ENCODE measurements at regions of chrX and their contacts with region 1.

Region 1: DNA sequence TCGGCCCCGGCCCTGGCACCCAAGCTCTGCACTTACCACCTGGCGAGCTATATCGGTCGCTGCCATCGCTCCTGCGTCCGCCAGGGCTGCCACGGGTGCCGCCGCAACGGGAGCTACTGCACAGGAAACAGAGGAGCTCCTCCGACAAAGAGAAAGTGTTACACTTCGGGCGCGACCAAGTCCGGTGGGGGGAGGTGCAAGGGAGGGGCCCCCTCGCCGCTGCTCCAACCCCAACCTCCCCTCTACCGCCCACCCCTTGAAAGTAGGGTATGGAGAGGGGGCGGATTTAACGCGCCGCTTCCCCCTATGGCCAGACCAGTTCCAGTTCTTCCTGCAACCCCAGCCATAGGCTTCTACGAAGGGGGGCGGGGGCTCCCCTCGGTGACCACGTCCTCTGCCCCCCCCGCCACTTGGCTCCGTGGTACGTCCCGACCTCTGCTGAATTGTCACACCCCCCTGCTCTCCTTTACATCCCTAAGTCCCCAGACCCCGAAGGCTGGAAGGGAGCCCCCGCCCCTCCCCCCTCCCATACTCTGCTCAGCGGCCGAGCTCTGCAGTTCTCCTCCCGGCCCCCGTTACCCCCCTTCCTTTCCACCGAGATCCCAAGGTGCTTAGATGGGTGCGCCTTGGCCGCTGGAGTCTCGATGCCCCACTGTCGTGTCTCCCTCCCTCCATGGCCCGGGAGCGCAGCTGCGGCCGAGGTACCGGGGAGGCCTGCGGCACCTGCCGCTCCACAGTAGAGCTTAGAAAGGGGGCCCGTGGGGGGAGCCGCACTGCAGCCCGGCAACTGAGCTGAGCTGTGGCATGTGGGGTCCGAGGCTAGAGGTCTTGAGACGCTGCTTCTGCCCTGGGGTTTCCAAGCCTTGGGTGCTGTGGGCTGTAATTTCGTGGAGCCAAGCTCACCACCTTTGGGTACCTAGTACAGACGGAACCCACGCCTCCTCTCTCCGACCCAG is at the start of gene SEPTIN6:
- DNase-seq: peak; percentile 63 to 86 (median 85)
- H3K4me3 ChIP-seq: peak within 1 kb of the TSS; percentile 67 to 88 (median 84)
- H3K4me3 Mint-ChIP-seq: peak within 1 kb of the TSS; percentile 90 to 95
- H3K27ac ChIP-seq: peak within 1 kb of the TSS; percentile 82 to 83
- H3K27ac Mint-ChIP-seq: peak within 1 kb of the TSS; percentile 91 to 96 (median 95)
- H3K4me1 ChIP-seq: peaks cover 34 to 35% of the 10 kb centered on the region in 2 donors
- H3K4me1 Mint-ChIP-seq: peaks cover 24% of the 10 kb centered on the region
- H3K27me3 ChIP-seq: no peaks in the 10 kb centered on the region
- H3K27me3 Mint-ChIP-seq: peaks cover 2 to 9% (median 2%) of the 10 kb centered on the region in 3 donors
- CTCF ChIP-seq: no peak
- polyA plus RNA-seq, gene SEPTIN6: 21.8 to 52.7 (median 31.1) TPM

Region 2: DNA sequence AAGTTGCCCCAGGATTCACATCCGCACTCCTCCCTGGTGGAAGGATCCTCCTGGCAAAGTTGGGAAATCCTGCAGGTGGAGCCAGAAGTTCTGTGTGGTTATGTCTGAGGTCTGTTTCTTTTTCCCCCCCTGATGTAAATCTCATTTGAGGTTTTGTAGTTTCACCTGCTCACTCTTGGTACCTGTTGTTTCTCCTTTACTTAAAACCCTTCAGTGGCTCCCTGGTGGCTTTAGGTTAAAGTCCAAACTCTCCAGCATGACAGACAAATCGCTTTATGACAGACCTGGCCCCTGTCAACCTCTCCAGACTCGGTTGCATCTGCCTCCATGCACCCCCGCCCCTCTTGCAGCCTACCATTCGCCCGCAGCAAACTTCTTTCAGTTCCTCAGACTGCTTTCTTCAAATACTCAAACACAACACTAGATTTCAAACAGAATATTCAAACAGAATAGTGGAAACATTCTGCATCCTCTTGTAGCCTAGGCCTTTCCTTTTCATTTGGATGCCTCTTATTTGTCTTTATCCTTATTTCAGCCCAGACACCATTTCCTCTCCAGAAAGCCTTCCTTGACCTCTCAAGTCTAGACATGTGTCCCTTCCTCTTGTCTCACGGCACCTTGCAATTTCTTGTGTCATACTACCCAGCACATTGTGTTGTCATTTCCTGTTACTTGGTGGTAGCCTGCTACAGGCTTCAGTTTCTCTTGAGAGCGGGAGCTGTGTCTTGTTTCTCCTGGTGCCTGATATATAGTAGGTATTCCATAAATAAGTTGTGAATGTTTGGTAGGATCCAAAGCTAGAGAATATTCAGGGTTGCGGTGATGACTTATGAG is 941.2 kb before region 1 on chrX:
- intact Hi-C with region 1: no loop called
- DNase-seq: peak; percentile 76 to 86 (median 84)
- H3K4me3 ChIP-seq: peak overlapping the region in 1 of 3 experiments; percentile 25
- H3K4me3 Mint-ChIP-seq: peak overlapping the region; percentile 7 to 60
- H3K27ac ChIP-seq: peak overlapping the region; percentile 44 to 87
- H3K27ac Mint-ChIP-seq: peak overlapping the region; percentile 77 to 96 (median 82)
- H3K4me1 ChIP-seq: peaks cover 47% of the 10 kb centered on the region in 2 donors
- H3K4me1 Mint-ChIP-seq: peaks cover 44% of the 10 kb centered on the region
- H3K27me3 ChIP-seq: no peaks in the 10 kb centered on the region
- H3K27me3 Mint-ChIP-seq: peaks cover 0 to 14% (median 0%) of the 10 kb centered on the region in 3 donors
- CTCF ChIP-seq: no peak

Region 3: GRCh38 chrX:119529345-119530276 is 163.7 kb before region 1 on chrX:
- intact Hi-C with region 1: no loop called
- DNase-seq: peak in 2 of 3 donors; percentile 27 to 28
- H3K4me3 ChIP-seq: peak overlapping the region; percentile 3 to 69 (median 17)
- H3K4me3 Mint-ChIP-seq: peak overlapping the region; percentile 47 to 79
- H3K27ac ChIP-seq: peak overlapping the region; percentile 46 to 74
- H3K27ac Mint-ChIP-seq: peak overlapping the region; percentile 49 to 86 (median 86)
- H3K4me1 ChIP-seq: peaks cover 31 to 36% of the 10 kb centered on the region in 2 donors
- H3K4me1 Mint-ChIP-seq: peaks cover 34% of the 10 kb centered on the region
- H3K27me3 ChIP-seq: no peaks in the 10 kb centered on the region
- H3K27me3 Mint-ChIP-seq: peaks cover 0 to 13% (median 0%) of the 10 kb centered on the region in 3 donors
- CTCF ChIP-seq: no peak

Region 4: DNA sequence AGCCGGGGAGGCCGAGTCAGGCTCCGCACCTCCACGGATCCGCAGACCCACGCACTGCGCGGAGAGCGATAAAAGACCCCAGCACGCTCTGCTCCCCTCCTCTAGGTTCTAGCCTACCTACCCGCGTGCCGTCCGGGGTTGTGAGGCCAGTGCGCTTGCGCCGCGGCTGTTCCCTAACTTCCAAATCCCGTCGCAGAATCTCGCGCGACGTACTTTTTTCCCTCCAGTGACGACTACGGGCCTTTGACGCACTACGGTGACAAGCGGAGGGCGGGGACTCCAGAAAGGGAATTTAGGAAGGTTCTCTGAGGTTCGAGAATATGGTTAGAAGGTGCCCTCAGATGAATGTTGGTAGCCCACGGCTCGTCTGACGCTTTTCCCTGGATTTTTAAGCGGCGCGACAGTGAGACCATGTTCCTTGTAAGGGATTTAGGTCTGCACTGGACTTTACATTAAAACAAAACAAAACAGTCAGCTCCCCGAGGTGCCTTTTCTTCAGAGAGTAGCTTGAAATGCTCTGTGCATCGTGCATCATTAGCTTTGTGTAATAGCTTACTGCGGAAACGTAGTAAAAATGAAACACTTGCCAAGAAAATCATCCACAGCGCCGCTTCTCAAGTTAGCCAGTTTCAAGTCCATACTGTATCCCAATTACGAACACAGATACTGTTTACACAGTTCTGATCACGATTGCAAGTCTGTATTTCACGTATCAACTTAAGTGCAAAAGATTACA is 86.9 kb before region 1 on chrX and contains the start of gene NKRF:
- intact Hi-C with region 1: loop called in 1 of 2 experiments (anchors 10 kb)
- DNase-seq: peak; percentile 89 to 91 (median 89)
- H3K4me3 ChIP-seq: peak within 1 kb of the TSS; percentile 78 to 86 (median 83)
- H3K4me3 Mint-ChIP-seq: peak within 1 kb of the TSS; percentile 95 to 97
- H3K27ac ChIP-seq: peak within 1 kb of the TSS; percentile 71 to 91
- H3K27ac Mint-ChIP-seq: peak within 1 kb of the TSS; percentile 97 to 99 (median 99)
- H3K4me1 ChIP-seq: peaks cover 11 to 14% of the 10 kb centered on the region in 2 donors
- H3K4me1 Mint-ChIP-seq: peaks cover 18% of the 10 kb centered on the region
- H3K27me3 ChIP-seq: no peaks in the 10 kb centered on the region
- H3K27me3 Mint-ChIP-seq: peaks cover 0 to 35% (median 0%) of the 10 kb centered on the region in 3 donors
- CTCF ChIP-seq: no peak
- polyA plus RNA-seq, gene NKRF: 1.3 to 4.7 (median 2.4) TPM

Region 5: GRCh38 chrX:119617517-119618164 is 75.7 kb before region 1 on chrX:
- intact Hi-C with region 1: loop called in 1 of 2 experiments (anchors 5 kb)
- DNase-seq: peak in 2 of 3 donors; percentile 30 to 34
- H3K4me3 ChIP-seq: peak overlapping the region in 2 of 3 experiments; percentile 21 to 66
- H3K4me3 Mint-ChIP-seq: peak overlapping the region; percentile 31 to 75
- H3K27ac ChIP-seq: peak overlapping the region; percentile 71 to 73
- H3K27ac Mint-ChIP-seq: peak overlapping the region; percentile 81 to 93 (median 88)
- H3K4me1 ChIP-seq: peaks cover 37 to 43% of the 10 kb centered on the region in 2 donors
- H3K4me1 Mint-ChIP-seq: peaks cover 44% of the 10 kb centered on the region
- H3K27me3 ChIP-seq: no peaks in the 10 kb centered on the region
- H3K27me3 Mint-ChIP-seq: peaks cover 0 to 7% (median 0%) of the 10 kb centered on the region in 3 donors
- CTCF ChIP-seq: no peak

Region 6: DNA sequence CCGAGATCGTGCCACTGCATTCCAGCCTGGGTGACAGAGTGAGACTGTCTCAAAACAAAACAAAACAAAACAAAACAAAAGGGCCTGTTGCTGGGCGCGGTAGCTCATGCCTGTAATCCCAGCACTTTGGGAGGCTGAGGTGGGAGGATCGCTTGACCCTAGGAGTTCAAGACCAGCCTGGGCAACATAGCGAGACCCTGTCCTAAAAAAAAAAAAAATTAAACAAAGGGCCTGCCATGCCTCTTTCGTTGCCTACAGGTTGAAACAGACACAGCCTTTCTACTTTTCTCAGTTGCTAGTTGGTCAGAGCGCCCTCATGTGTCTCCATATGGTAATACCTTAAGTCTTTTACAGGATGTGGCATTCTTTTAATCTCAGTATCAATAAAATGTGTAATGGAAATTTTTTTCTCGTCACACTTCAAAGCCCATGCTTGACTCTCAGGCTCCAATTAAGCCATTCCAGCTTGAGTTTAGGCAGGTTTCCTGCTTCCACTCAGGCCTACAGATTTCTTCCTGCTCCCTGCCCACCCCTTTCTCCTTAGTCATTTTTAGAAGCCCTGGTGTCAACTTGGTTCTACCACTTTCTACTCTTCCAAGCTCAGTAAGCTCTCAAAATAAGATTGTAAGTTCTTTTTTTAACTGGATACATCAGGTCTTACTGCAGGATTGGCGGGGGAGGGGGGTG is 60.4 kb after region 1 on chrX:
- intact Hi-C with region 1: loop called in 1 of 2 experiments (anchors 10 kb)
- DNase-seq: peak in 2 of 3 donors; percentile 34 to 39
- H3K4me3 ChIP-seq: no peak overlapping the region
- H3K4me3 Mint-ChIP-seq: no peak overlapping the region
- H3K27ac ChIP-seq: no peak overlapping the region
- H3K27ac Mint-ChIP-seq: peak overlapping the region in 5 of 7 donors; percentile 48 to 68 (median 50)
- H3K4me1 ChIP-seq: peaks cover 37 to 41% of the 10 kb centered on the region in 2 donors
- H3K4me1 Mint-ChIP-seq: peaks cover 42% of the 10 kb centered on the region
- H3K27me3 ChIP-seq: no peaks in the 10 kb centered on the region
- H3K27me3 Mint-ChIP-seq: peaks cover 0 to 13% (median 0%) of the 10 kb centered on the region in 3 donors
- CTCF ChIP-seq: peak; percentile 60

Region 7: GRCh38 chrX:120228187-120228908 is 535.0 kb after region 1 on chrX:
- intact Hi-C with region 1: no loop called
- DNase-seq: no peak
- H3K4me3 ChIP-seq: no peak overlapping the region
- H3K4me3 Mint-ChIP-seq: no peak overlapping the region
- H3K27ac ChIP-seq: no peak overlapping the region
- H3K27ac Mint-ChIP-seq: peak overlapping the region in 1 of 7 donors; percentile 26
- H3K4me1 ChIP-seq: no peaks in the 10 kb centered on the region
- H3K4me1 Mint-ChIP-seq: peaks cover 5% of the 10 kb centered on the region
- H3K27me3 ChIP-seq: no peaks in the 10 kb centered on the region
- H3K27me3 Mint-ChIP-seq: peaks cover 0 to 6% (median 0%) of the 10 kb centered on the region in 3 donors
- CTCF ChIP-seq: no peak